Common myeloid progenitor, CD34-positive (primary cell): ENCODE measurements at regions of chr7 and their contacts with region 1.

Region 1: GRCh38 chr7:45136106-45137060 is 21.2 kb upstream of the RAMP3 start:
- DNase-seq: peak; percentile 80 to 91 (median 85)
- H3K4me3 ChIP-seq: no peak overlapping the region
- H3K27ac ChIP-seq: no peak overlapping the region
- H3K4me1 ChIP-seq: peaks cover 0 to 19% (median 2%) of the 10 kb centered on the region in 4 experiments
- H3K27me3 ChIP-seq: no peaks in the 10 kb centered on the region

Region 2: DNA sequence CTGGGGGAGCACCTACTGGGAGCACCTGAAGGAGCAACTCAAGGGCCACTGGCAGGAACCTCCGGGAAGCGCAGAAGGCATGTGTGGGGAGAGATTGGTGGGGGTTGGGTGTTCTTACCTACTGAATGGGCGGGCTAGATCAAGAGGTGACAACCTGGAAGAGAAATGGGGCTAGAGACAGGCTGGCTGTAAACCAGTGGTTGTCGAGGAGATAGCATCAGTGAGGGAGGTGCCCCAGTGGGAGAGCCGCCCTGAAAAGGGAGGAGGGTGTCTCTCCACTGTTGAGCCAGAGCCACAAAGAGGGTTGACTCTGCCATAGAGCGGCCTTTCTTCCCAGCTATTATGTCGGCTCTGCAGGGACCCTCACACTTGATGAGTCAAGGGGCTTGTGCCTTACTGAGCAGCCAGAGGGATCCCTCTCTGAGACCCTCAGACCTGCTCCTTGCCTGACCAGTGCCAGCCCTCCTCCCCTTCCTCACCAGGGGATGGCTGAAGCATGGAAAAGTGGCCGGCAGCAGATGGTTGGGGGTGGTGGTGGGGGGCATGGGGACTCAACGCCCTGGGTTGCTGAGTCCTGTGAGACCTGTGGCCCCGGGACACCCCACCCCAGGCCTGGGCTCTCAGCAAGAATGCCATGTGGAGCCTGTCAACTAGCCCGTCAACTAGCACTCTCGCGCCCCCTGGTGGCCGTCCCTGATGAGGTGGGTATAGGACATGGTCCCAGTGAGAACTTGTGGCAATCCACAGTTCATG is 214.6 kb before region 1 on chr7:
- CTCF ChIA-PET with region 1: interaction called, 10 read pairs
- POLR2A ChIA-PET with region 1: no interaction called
- DNase-seq: peak; percentile 78 to 89 (median 83)
- H3K4me3 ChIP-seq: peak overlapping the region in 1 of 7 experiments; percentile 8
- H3K27ac ChIP-seq: no peak overlapping the region
- H3K4me1 ChIP-seq: peaks cover 0 to 3% (median 0%) of the 10 kb centered on the region in 4 experiments
- H3K27me3 ChIP-seq: no peaks in the 10 kb centered on the region

Region 3: GRCh38 chr7:45073786-45074527 is 62.4 kb before region 1 on chr7:
- CTCF ChIA-PET with region 1: interaction called, 17 read pairs
- POLR2A ChIA-PET with region 1: no interaction called
- DNase-seq: no peak
- H3K4me3 ChIP-seq: no peak overlapping the region
- H3K27ac ChIP-seq: no peak overlapping the region
- H3K4me1 ChIP-seq: no peaks in the 10 kb centered on the region
- H3K27me3 ChIP-seq: no peaks in the 10 kb centered on the region

Region 4: DNA sequence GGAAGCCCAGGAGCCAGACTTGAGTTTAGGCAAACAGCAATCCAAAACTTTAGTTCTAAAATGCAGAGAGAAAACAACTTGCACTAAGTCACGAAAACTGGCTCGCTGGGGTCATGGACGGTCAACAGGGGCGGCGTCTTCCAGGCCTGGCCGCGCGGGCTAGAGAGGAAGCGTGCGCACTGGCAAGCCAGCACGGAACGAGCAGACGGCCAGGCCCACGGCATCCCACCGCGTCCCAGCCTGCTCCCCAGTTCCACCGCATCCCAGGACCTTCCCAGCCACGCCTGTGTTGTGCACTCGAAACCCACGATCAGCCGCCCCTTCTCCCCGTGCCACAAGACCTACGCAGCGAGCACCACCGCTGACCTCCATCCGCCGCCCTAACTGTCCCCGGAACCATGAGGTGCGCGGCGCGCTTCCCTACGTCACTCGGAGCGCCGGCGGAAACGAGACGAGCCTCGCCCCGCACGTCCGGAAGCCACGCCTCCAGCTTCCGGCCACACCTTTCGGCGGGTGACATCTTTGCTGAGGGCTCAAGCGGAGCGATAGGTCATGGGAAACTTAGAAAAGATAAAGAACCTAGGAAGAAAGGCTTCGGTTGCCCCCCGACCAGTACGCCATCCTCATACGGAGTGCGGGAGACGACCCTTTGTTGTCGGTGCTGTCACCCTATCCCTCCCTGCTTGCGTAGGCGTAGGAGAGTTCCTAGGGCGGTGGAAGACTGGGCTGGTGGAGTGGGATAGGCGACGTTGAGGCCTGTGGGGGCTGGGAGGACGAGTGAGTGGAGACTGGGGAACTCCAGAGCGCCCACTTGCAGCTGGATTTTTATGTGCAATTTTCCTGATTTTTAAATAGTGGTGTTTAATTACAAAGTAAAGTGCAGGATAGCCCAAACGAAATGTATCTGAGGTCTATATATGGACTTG is 24.8 kb before region 1 on chr7 and contains the start of gene TBRG4:
- CTCF ChIA-PET with region 1: interaction called, 85 read pairs
- POLR2A ChIA-PET with region 1: interaction called, 9 read pairs
- DNase-seq: peak; percentile 97 to 98 (median 98)
- H3K4me3 ChIP-seq: peak within 1 kb of the TSS; percentile 65 to 99 (median 90)
- H3K27ac ChIP-seq: peak within 1 kb of the TSS; percentile 94 to 99
- H3K4me1 ChIP-seq: peaks cover 3 to 29% (median 22%) of the 10 kb centered on the region in 4 experiments
- H3K27me3 ChIP-seq: no peaks in the 10 kb centered on the region

Region 5: GRCh38 chr7:45122975-45123860 is 13.2 kb before region 1 on chr7:
- CTCF ChIA-PET with region 1: interaction called, 85 read pairs
- POLR2A ChIA-PET with region 1: no interaction called
- DNase-seq: no peak
- H3K4me3 ChIP-seq: no peak overlapping the region
- H3K27ac ChIP-seq: no peak overlapping the region
- H3K4me1 ChIP-seq: peaks cover 0 to 8% (median 0%) of the 10 kb centered on the region in 4 experiments
- H3K27me3 ChIP-seq: no peaks in the 10 kb centered on the region

Region 6: DNA sequence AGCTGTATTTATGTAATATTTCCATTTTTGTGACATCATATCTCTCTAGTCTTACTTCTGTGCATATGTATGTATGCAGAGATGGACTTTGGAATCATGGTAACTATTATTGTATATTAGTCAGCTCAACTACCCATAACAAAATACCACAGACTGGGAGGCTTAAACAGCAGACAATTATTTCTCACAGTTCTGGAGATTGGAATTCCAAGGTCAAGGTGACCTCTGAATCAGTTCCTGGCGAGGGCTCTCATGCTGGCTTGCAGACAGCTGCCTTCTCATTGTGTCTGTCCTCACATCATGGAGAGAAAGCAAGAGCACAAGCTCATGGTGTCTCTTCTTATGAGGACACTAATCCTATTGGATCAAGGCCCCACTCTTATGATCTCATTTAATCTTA is 100.3 kb after region 1 on chr7:
- CTCF ChIA-PET with region 1: no interaction called
- POLR2A ChIA-PET with region 1: no interaction called
- DNase-seq: no peak
- H3K4me3 ChIP-seq: no peak overlapping the region
- H3K27ac ChIP-seq: no peak overlapping the region
- H3K4me1 ChIP-seq: no peaks in the 10 kb centered on the region
- H3K27me3 ChIP-seq: peaks cover 0 to 19% (median 15%) of the 10 kb centered on the region in 5 experiments

Region 7: GRCh38 chr7:45430397-45430796 is 294.0 kb after region 1 on chr7:
- CTCF ChIA-PET with region 1: no interaction called
- POLR2A ChIA-PET with region 1: no interaction called
- DNase-seq: no peak
- H3K4me3 ChIP-seq: no peak overlapping the region
- H3K27ac ChIP-seq: no peak overlapping the region
- H3K4me1 ChIP-seq: no peaks in the 10 kb centered on the region
- H3K27me3 ChIP-seq: peaks cover 0 to 3% (median 1%) of the 10 kb centered on the region in 5 experiments